Activated CD4-positive, alpha-beta T cell treated with anti-CD3 and anti-CD28 coated beads, Interleukin-2, amount 10 ng/mL, durations not matched to agents 7 days and 5 days (primary cell): ENCODE measurements at regions of chr19 and their contacts with region 1.

Region 1: DNA sequence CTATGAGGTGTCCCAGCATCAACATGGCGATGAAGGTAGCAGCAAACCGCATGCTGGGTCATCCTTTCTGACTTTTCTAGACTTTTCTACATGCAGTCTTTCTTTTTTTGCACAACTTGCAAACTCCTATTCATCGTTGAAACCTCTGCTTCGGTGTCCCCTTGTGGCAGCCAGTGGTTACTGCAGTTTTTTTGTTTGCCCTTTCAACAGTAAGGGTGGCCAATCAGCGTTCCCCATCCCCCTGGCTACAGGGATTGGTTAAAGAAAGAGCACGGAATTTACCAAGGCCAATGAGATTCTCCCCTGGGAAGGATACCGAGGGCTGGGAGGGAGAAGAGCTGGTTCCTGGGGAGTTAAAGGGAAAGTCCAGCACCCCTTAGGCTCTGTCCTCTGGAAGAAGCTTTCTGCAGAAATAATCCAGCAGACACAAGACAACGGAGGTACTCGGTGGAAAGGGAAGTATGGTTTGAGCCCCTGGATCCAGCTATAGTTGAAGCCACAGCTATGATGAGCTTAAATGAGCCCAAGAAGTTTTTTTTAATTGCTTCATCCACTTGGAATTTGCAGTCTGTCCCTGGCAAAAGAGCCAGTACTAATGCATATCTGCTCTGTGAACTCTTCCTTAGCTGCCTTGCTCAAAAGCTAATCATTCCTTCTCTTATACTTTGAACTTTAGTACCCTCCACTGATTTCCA is 5.6 kb upstream of the LSM4 start:
- DNase-seq: peak; percentile 94
- H3K4me3 Mint-ChIP-seq: peak overlapping the region; percentile 33
- H3K27ac Mint-ChIP-seq: peak overlapping the region; percentile 51
- H3K4me1 Mint-ChIP-seq: peaks cover 24% of the 10 kb centered on the region
- H3K27me3 Mint-ChIP-seq: no peaks in the 10 kb centered on the region

Region 2: DNA sequence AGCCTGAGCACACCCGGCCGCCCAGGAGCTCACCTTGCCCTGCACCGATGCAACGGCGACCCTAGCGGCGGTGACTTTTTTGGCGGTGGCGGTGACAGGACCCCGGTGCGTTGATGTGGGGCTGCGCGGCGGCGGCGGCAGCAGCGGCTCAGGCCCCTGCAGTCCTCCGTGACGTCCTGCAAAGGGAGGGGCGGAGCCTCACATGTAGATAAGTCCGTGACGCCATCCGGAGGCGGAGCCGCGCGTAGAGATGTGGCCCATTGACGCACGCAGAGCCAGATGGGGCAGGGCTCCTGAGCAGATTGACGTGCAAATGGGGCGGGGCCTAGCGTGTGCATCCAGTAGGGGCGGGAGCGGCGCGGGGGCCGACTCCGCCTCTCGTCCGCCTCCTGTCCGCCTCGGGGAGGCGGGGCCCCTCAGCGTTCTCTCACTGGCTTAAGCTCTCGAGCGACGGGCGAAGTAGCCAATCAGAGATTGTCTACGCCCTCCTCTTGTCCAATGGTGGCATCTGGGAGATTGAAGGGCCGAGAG is 124.6 kb before region 1 on chr19 and contains the start of gene RAB3A:
- CTCF ChIA-PET with region 1: interaction called, 14 read pairs
- POLR2A ChIA-PET with region 1: no interaction called
- DNase-seq: peak; percentile 100
- H3K4me3 Mint-ChIP-seq: peak within 1 kb of the TSS; percentile 94
- H3K27ac Mint-ChIP-seq: peak within 1 kb of the TSS; percentile 98
- H3K4me1 Mint-ChIP-seq: peaks cover 23% of the 10 kb centered on the region
- H3K27me3 Mint-ChIP-seq: peaks cover 4% of the 10 kb centered on the region
- total RNA-seq, gene RAB3A: 4.0 to 5.2 TPM

Region 3: GRCh38 chr19:18340190-18340989 is 11.9 kb after region 1 on chr19 and contains the start of gene PGPEP1:
- CTCF ChIA-PET with region 1: interaction called, 22 read pairs
- POLR2A ChIA-PET with region 1: no interaction called
- DNase-seq: peak; percentile 51
- H3K4me3 Mint-ChIP-seq: peak within 1 kb of the TSS; percentile 82
- H3K27ac Mint-ChIP-seq: peak within 1 kb of the TSS; percentile 81
- H3K4me1 Mint-ChIP-seq: peaks cover 22% of the 10 kb centered on the region
- H3K27me3 Mint-ChIP-seq: no peaks in the 10 kb centered on the region
- total RNA-seq, gene PGPEP1: 24.1 to 24.8 TPM

Region 4: DNA sequence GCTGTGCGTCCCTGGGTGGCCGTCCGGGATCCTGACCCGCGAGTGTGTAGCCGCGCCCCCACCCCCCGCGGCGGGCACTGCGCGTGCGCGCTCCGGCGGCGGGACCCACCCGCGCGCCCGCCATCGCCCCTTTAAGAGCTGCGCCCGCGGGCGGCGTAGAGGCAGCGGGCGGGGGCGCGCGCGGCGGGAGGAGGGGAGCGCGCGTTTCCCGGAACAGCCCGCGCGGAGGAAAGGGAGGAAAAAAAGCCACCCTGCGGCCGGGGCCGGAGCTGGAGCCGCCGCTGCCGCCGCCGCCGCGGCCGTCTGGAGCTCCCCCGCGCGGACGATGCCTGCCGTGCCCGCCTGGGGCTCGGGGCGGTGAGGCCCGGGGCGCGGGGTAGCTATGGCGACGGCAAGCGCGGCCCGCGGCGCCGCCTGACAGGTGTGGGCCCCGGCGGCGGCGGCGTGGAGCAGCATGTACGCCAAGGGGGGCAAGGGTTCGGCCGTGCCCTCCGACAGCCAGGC is 90.8 kb after region 1 on chr19 and contains the start of gene SSBP4:
- CTCF ChIA-PET with region 1: interaction called, 10 read pairs
- POLR2A ChIA-PET with region 1: no interaction called
- DNase-seq: peak; percentile 64
- H3K4me3 Mint-ChIP-seq: peak within 1 kb of the TSS; percentile 89
- H3K27ac Mint-ChIP-seq: peak within 1 kb of the TSS; percentile 85
- H3K4me1 Mint-ChIP-seq: peaks cover 84% of the 10 kb centered on the region
- H3K27me3 Mint-ChIP-seq: peaks cover 28% of the 10 kb centered on the region
- total RNA-seq, gene SSBP4: 112 to 123 TPM